Endothelial cell of umbilical vein (primary cell): ENCODE measurements at regions of chr15 and their contacts with region 1.

Region 1: GRCh38 chr15:92645030-92645756 is 10.4 kb downstream of the FAM174B start:
- DNase-seq: peak; percentile 87
- H3K4me3 ChIP-seq: no peak overlapping the region
- H3K27ac ChIP-seq: peak overlapping the region; percentile 72
- H3K4me1 ChIP-seq: peaks cover 35% of the 10 kb centered on the region
- H3K27me3 ChIP-seq: no peaks in the 10 kb centered on the region
- CTCF ChIP-seq: no peak
- POLR2A ChIP-seq: peak; percentile 71

Region 2: GRCh38 chr15:91679429-91679828 is 965.8 kb before region 1 on chr15:
- CTCF ChIA-PET with region 1: no interaction called
- POLR2A ChIA-PET with region 1: no interaction called
- dilution Hi-C with region 1: no loop called
- intact Hi-C with region 1: no loop called
- DNase-seq: no peak
- H3K4me3 ChIP-seq: no peak overlapping the region
- H3K27ac ChIP-seq: no peak overlapping the region
- H3K4me1 ChIP-seq: no peaks in the 10 kb centered on the region
- H3K27me3 ChIP-seq: no peaks in the 10 kb centered on the region
- CTCF ChIP-seq: no peak
- POLR2A ChIP-seq: no peak

Region 3: DNA sequence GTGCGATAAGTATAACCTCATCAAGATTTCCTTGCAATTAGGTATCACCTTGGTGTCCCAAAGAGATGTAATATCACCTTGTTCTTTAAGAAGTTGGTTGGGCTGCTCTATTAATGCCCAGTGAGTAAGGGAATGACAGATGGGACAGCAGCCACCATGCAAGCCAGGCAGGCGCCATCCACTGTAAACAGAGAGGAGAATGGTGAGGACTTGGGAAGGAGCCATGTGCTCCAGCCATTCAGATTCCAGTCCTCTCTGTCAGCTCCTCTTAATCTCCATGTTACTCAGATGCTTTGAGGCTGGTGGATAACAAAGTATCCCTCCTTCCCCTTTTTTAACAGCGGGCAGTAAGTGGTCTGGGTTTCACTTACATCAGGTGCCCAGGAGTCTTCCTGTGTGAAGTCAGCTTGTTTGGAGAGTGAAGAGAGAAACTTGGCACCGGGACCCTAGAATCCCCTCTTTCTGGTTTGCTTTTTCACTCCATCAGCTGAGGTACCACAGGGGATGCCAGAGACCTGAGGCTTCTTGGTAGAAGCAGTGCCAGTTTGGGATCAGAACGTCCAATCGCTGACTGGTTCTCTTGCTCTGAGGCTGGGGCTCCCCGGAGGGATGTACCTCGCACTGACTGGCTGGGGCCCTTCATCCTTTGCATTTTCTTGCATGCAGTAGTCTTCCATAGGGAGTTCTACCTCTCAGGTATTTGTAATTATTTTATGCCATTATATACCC is 762.2 kb before region 1 on chr15:
- CTCF ChIA-PET with region 1: no interaction called
- POLR2A ChIA-PET with region 1: no interaction called
- dilution Hi-C with region 1: no loop called
- intact Hi-C with region 1: no loop called
- DNase-seq: no peak
- H3K4me3 ChIP-seq: no peak overlapping the region
- H3K27ac ChIP-seq: no peak overlapping the region
- H3K4me1 ChIP-seq: no peaks in the 10 kb centered on the region
- H3K27me3 ChIP-seq: no peaks in the 10 kb centered on the region
- CTCF ChIP-seq: no peak
- POLR2A ChIP-seq: no peak

Region 4: DNA sequence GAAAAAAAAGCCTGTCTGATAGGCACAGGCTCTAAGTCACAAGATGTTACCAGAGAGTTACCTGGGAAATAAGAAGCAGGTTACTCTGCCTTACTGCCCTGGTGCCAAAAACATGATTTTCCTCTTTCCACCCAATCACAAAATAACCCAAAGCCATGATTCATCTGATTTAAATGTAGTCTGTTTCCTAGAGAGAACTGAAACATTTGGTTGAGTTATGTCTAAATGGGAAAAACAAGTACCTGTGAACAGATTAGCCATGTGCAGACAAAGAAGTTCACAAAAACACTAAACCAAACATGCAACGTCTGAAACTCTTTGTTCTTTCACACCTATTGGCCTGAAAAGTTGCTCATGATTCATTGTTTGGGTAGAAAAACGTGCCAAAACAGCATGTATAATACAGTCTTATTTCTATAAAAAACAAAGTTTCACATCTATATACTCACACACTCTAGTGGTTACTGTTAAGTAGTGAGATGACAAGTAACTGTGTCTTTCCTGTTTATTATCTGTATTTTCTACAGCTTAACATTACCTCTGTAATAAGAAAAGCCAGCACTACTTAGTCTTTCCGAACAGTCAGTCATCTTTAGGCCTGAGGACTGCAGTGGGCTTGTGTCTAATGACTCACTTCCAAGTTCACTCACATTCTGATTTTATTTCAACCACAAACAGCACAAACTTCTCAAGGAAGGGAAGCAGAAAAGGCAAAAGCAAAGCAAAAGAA is 19.8 kb before region 1 on chr15:
- CTCF ChIA-PET with region 1: interaction called, 7 read pairs
- POLR2A ChIA-PET with region 1: no interaction called
- dilution Hi-C with region 1: no loop called
- intact Hi-C with region 1: loop called (anchors 2 kb)
- DNase-seq: peak; percentile 93
- H3K4me3 ChIP-seq: no peak overlapping the region
- H3K27ac ChIP-seq: peak overlapping the region; percentile 89
- H3K4me1 ChIP-seq: peaks cover 43% of the 10 kb centered on the region
- H3K27me3 ChIP-seq: no peaks in the 10 kb centered on the region
- CTCF ChIP-seq: no peak
- POLR2A ChIP-seq: peak; percentile 33